A549 (cell line): ENCODE measurements at regions of chr2 and their contacts with region 1.

Region 1: GRCh38 chr2:54704688-54705605 is 18.5 kb upstream of the EML6 start:
- DNase-seq: peak; percentile 40 to 74
- ATAC-seq: peak; percentile 81 to 89; a peak in 5 of 6 replicates
- H3K4me3 ChIP-seq: no peak overlapping the region
- H3K27ac ChIP-seq: no peak overlapping the region
- H3K4me1 ChIP-seq: no peaks in the 10 kb centered on the region
- CTCF ChIP-seq: peak; percentile 93
- EP300 ChIP-seq: no peak
- POLR2A ChIP-seq: no peak
- RAD21 ChIP-seq: peak; percentile 93 to 95

Region 2: DNA sequence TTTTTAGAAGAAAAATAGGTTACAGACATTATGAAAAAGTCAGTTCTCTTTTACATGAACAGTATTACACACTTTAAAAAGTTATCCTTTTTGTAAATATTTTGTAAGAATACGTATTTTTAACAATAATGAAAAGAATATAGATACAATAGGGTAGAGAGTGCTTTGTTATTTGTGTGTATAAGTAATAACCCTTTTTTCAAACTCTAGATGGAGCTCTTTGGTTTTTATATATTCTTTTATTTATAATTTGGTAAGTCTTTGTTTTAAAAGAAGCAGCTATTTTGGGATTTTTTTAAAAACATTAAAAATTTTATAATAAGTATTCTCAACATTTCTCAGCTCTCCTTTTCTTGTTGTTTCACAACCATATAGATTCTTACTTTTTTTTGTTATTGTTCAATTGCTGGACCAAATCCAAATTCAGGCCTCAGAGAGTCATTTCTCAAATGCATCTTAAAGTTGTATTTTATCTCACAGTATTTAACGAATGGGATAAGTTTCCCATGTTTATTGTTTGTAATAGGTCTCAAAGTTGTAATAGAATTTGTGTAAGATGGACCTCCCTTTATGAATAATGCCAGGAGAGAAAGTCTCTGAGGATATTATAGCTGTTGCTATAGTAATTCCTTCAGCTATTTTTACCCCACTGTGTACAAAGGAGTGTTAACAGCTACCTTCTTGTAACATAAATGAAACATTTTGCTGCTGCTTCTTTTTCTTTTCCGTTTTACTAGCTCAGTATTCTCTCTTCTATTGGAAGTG is 543.1 kb before region 1 on chr2:
- CTCF ChIA-PET with region 1: interaction called, 21 read pairs
- POLR2A ChIA-PET with region 1: no interaction called
- DNase-seq: no peak
- ATAC-seq: no peak
- H3K4me3 ChIP-seq: no peak overlapping the region
- H3K27ac ChIP-seq: no peak overlapping the region
- H3K4me1 ChIP-seq: no peaks in the 10 kb centered on the region
- CTCF ChIP-seq: no peak; the same call in 2 of the 3 replicates
- EP300 ChIP-seq: no peak
- POLR2A ChIP-seq: no peak
- RAD21 ChIP-seq: peak; percentile 4 to 50; a peak in 3 of 5 replicates

Region 3: DNA sequence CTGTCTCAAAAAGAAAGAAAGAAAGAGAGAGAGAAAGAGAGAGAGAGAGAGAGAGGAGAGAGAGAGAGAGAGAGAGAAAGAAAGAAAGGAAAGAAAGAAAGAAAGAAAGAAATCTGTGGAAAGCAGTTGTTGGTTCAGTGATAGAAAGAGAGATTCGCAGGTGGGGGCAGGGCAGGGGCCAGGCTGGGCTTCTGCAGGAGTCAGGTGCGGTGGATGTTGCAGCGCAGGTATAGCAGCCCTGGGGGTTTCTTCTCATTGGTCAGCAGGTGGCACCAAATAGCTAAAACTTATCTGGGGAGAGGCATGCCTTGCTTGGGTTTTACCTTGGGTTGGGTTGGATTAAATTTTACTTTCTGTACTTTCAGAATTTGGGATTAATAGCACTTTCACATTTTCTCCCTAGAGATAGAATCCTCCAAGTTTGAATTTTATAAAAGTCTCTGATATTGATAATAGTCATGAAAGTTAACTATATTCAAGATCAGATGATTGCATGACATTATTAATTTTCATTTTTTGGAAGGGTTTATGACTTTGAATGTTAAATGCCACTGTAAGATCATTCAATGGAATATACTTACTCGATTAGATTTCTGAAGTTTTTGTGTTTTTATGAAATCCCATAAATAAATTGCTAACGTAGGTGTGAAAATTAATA is 182.2 kb before region 1 on chr2:
- CTCF ChIA-PET with region 1: interaction called, 127 read pairs
- POLR2A ChIA-PET with region 1: no interaction called
- DNase-seq: peak; percentile 64 to 79
- ATAC-seq: peak; percentile 91 to 93
- H3K4me3 ChIP-seq: no peak overlapping the region
- H3K27ac ChIP-seq: peak overlapping the region; percentile 41 to 74; a peak in 5 of 6 replicates
- H3K4me1 ChIP-seq: peaks cover 45% of the 10 kb centered on the region
- CTCF ChIP-seq: peak; percentile 85
- EP300 ChIP-seq: no peak
- POLR2A ChIP-seq: no peak
- RAD21 ChIP-seq: peak; percentile 95 to 96

Region 4: GRCh38 chr2:54657664-54658083 is 47.3 kb before region 1 on chr2:
- CTCF ChIA-PET with region 1: interaction called, 17 read pairs
- POLR2A ChIA-PET with region 1: no interaction called
- DNase-seq: peak; percentile 62 to 68
- ATAC-seq: peak; percentile 75 to 87
- H3K4me3 ChIP-seq: no peak overlapping the region
- H3K27ac ChIP-seq: peak overlapping the region in 1 of 2 experiments; percentile 47; a peak in 2 of 6 replicates
- H3K4me1 ChIP-seq: peaks cover under 1% of the 10 kb centered on the region; the same call in 2 of the 3 replicates
- CTCF ChIP-seq: peak; percentile 58
- EP300 ChIP-seq: no peak
- POLR2A ChIP-seq: no peak
- RAD21 ChIP-seq: peak; percentile 60 to 70; a peak in 4 of 5 replicates

Region 5: GRCh38 chr2:54691445-54692135 is 13.4 kb before region 1 on chr2:
- CTCF ChIA-PET with region 1: interaction called, 56 read pairs
- POLR2A ChIA-PET with region 1: no interaction called
- DNase-seq: no peak
- ATAC-seq: peak in 1 of 2 experiments; percentile 25; a peak in 1 of 6 replicates
- H3K4me3 ChIP-seq: no peak overlapping the region
- H3K27ac ChIP-seq: no peak overlapping the region
- H3K4me1 ChIP-seq: no peaks in the 10 kb centered on the region
- CTCF ChIP-seq: no peak
- EP300 ChIP-seq: no peak
- POLR2A ChIP-seq: no peak
- RAD21 ChIP-seq: no peak